ENCODE measurements at regions of chr12 and their contacts with region 1.

Region 1: DNA sequence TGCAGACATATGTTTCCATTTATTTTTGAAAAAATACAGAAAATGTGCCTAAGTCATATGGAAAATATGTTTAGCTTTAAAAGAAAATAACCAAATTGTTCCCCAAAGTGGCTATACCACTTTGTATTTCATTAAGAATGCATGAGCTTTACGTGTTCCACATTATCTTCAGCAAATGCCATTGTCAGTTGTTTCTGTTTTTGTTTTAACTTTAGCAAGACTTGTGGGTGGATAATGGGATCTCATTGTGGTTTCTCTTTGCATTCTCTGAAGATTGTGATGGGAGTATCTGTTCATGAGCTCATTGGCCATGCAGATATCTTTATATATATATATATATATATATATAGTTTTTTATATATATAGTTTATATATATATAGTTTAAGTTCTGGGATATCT is 181.5 kb downstream of the CCER1 start:
- DNase-seq: no peak
- ATAC-seq: no peak
- H3K4me3 ChIP-seq: no peak overlapping the region
- H3K4me1 ChIP-seq: no peaks in the 10 kb centered on the region
- CTCF ChIP-seq: no peak

Region 2: GRCh38 chr12:90695415-90695814 is 78.1 kb before region 1 on chr12:
- intact Hi-C with region 1: no loop called
- DNase-seq: no peak
- ATAC-seq: no peak
- H3K4me3 ChIP-seq: no peak overlapping the region
- H3K4me1 ChIP-seq: no peaks in the 10 kb centered on the region
- CTCF ChIP-seq: no peak

Region 3: GRCh38 chr12:90712671-90713070 is 60.8 kb before region 1 on chr12:
- intact Hi-C with region 1: no loop called
- DNase-seq: no peak
- ATAC-seq: peak; percentile 49
- H3K4me3 ChIP-seq: no peak overlapping the region
- H3K4me1 ChIP-seq: no peaks in the 10 kb centered on the region
- CTCF ChIP-seq: no peak

Region 4: DNA sequence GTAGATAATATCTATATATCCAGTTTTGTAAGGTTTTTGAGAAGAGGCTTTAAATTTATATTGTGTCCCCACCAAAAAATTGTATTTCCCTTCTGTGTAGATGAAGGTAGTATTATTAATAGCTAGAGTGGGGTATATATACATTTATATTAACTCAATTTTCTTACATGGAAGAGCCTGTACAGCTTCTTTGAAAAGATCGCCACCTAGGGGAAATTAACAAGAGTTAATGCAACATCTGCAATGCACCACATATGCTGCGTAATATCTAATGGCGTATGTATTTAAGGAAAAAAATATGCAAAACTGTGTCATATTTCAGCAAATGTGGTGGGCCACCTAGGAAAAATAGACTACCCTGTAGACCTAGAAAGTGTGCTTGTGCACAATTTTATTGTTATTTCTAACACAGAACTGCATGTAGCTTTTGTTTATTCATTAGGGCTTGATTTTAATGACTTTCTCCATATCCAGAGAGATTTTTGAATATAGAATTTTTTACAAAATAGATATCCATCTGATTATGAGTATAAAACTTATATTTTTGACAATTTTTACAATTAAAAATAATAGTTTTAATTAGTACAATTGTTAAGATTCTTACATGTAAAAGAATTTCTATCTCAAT is 167.5 kb after region 1 on chr12:
- intact Hi-C with region 1: loop called in 1 of 2 experiments (anchors 5 kb)
- DNase-seq: no peak
- ATAC-seq: peak; percentile 36
- H3K4me3 ChIP-seq: no peak overlapping the region
- H3K4me1 ChIP-seq: no peaks in the 10 kb centered on the region
- CTCF ChIP-seq: no peak

Measured in mucosa of descending colon (tissue), 3 donors.